ENCODE measurements at regions of chr15 and their contacts with region 1.

Region 1: DNA sequence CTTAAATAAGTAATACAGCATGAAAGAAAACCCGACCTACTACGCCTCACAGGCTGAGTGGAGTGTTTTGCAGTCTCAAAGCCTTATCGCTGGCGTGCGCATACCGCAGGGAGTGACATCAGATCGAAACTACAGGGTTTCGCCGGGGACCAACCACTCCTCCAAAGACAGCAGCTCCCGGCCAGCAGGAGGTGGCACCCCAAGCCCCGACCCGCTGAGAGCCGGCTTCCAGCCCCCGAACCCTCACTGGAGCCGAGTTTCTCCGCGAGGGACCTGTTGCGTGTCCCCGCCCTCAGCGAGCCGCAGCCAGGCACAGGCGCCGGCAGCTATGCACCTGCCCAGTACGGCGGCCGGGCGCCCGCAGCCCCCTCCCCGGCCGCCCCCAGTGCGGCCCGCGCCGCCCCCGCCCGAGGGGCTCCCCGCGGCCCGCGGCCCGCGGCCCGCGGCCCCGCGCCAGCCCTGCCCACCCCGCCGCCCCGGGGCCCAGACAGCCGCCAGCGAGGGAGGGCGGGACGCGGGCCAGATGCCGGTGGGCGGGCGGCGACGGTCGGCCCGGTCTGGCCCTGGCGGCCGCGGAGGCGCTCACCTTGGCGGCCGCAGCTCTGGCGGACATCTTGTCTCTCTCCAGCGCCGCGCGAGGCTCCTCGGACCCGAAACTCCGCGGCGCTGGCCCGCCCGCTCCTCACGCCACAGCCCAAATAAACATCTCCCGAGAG is 694 bp downstream of the TJP1 start:
- DNase-seq: peak; percentile 90
- H3K4me3 ChIP-seq: peak overlapping the region; percentile 72 to 99 (median 93)
- H3K27ac ChIP-seq: peak overlapping the region; percentile 99
- H3K4me1 ChIP-seq: peaks cover 3% of the 10 kb centered on the region
- H3K27me3 ChIP-seq: no peaks in the 10 kb centered on the region
- CTCF ChIP-seq: peak; percentile 15 to 48

Region 2: DNA sequence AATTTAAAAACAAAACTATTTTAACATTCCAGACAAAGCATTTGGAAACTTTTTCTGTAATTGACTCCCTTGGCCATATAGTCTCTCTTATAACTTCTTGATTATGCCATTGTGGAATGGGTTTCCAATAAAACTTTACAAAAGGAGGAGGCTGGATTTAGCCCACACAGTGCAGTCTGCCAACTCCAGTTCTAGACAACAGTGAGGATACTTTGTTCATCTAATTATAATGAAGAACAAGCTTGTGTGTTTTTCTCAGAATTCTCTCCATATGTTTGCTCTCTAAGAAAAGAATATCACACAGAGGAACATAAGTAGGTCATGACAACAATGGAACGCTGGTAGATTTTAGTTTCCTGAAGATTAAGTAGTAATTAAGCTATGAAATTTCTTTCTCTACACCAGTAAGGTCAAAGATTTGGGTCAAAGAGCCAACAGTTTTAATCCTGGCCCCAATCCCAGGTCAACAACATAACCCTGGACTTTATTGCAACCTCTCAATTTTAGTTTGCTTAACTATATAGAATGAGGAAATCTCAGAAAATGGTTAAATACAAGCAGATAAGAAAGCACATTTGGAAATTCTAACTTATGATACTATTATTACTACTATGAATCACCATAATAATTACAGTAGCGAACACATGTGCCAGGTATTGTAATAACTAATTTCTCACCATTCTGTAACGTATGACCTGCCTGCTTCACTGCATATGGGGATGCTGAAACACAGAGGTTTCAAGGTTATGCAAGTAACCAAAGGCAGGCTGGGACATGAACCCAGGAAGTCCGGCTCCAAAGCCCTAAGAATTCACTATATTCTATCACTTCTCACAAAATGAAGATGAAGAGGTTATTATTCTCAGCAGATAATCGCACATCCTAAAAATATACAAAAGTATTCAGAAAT is 65.0 kb before region 1 on chr15:
- CTCF ChIA-PET with region 1: no interaction called
- dilution Hi-C with region 1: no loop called
- in situ Hi-C with region 1: no loop called
- intact Hi-C with region 1: loop called (anchors 5 kb)
- DNase-seq: peak; percentile 87
- H3K4me3 ChIP-seq: peak overlapping the region in 1 of 3 experiments; percentile 14
- H3K27ac ChIP-seq: peak overlapping the region; percentile 69
- H3K4me1 ChIP-seq: peaks cover 21% of the 10 kb centered on the region
- H3K27me3 ChIP-seq: no peaks in the 10 kb centered on the region
- CTCF ChIP-seq: no peak

Region 3: DNA sequence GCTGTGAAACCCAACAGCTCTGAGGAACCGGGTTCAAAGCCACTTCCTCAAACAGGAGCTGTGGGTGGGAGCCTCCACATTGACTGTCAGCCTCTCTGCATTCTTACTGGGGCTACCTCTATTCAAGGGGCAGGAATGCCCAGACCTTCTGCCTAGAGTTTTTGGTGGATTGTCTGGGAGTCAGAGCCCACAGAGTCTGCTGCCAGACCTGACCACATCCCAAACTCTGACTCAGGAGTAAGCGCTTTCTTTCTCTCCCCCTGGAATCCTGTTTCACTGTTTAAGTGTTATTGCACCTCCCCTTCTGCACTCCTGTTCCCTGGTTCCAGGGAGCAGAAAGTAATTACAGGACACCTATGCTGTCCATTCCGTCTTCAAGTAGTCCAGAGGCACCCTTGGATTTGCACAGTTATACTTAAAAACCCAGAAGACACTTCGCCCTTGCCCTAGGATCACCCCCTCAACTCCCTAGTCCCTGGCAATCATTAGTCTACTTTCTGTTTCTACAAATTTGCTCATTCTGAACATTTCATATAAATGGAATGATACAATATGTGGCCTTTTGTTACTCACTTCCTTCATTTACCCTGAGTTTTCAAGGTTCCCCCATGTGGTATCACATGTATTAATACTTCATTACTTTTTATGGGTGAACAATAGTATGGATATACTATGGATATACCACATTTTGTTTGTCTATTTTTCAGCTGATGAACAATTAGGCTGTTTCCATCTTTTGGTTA is 38.6 kb after region 1 on chr15:
- CTCF ChIA-PET with region 1: no interaction called
- dilution Hi-C with region 1: loop called (anchors 5 kb)
- in situ Hi-C with region 1: no loop called
- intact Hi-C with region 1: loop called (anchors 5 kb)
- DNase-seq: peak; percentile 70
- H3K4me3 ChIP-seq: no peak overlapping the region
- H3K27ac ChIP-seq: peak overlapping the region; percentile 44
- H3K4me1 ChIP-seq: peaks cover 23% of the 10 kb centered on the region
- H3K27me3 ChIP-seq: no peaks in the 10 kb centered on the region
- CTCF ChIP-seq: no peak

Region 4: GRCh38 chr15:29917600-29918597 is 96.3 kb after region 1 on chr15:
- CTCF ChIA-PET with region 1: no interaction called
- dilution Hi-C with region 1: loop called (anchors 5 kb)
- in situ Hi-C with region 1: loop called in 1 of 2 experiments (anchors 5 kb)
- intact Hi-C with region 1: loop called (anchors 1 kb)
- DNase-seq: peak; percentile 31
- H3K4me3 ChIP-seq: no peak overlapping the region
- H3K27ac ChIP-seq: no peak overlapping the region
- H3K4me1 ChIP-seq: peaks cover 31% of the 10 kb centered on the region
- H3K27me3 ChIP-seq: no peaks in the 10 kb centered on the region
- CTCF ChIP-seq: no peak

Region 5: DNA sequence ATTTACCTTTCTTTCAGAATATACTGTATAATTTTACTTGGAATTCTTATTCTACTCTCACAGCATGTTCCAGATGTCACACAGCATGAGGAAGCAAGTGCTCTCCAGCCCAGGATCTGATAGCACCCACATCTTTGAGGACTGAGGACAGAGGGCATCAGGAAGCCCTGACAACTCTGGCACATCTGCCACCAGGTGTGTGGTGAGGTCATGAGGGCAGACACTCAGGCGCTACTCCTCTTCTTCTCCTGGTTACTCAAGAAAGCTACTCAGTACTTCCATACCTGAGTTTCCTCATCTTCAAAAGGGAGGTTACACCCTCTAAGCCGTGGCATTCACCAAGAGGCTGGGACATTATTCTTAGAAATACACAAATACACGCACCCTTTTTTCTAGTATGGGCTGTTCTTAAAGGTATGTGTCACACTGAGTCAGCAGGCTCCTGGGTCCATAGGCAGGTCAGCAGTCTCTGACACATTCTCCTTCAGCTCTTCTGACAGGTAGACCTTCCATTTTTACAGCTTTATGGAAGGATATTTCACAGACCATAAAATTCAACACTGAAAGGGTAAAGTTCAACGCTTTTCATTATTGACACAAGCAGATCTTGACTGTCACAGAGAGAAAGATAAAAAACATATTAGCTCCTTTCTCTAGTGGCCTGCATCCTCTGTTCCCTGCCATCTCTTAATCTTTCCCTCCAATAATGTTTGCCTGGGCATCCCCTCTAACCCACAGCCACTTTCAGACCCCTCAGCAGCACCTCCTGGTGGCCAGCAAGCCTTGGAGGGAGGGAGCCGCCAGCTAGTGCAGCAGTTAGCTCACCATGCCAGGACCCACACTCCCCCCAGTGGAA is 103.9 kb after region 1 on chr15:
- CTCF ChIA-PET with region 1: interaction called, 4 read pairs
- dilution Hi-C with region 1: no loop called
- in situ Hi-C with region 1: loop called in 1 of 2 experiments (anchors 5 kb)
- intact Hi-C with region 1: loop called (anchors 1 kb)
- DNase-seq: peak; percentile 93
- H3K4me3 ChIP-seq: no peak overlapping the region
- H3K27ac ChIP-seq: peak overlapping the region; percentile 76
- H3K4me1 ChIP-seq: peaks cover 42% of the 10 kb centered on the region
- H3K27me3 ChIP-seq: no peaks in the 10 kb centered on the region
- CTCF ChIP-seq: peak; percentile 56 to 62

Region 6: GRCh38 chr15:29945943-29946596 is 124.5 kb after region 1 on chr15:
- CTCF ChIA-PET with region 1: no interaction called
- dilution Hi-C with region 1: no loop called
- in situ Hi-C with region 1: no loop called
- intact Hi-C with region 1: loop called (anchors 1 kb)
- DNase-seq: peak; percentile 97
- H3K4me3 ChIP-seq: no peak overlapping the region
- H3K27ac ChIP-seq: peak overlapping the region; percentile 80
- H3K4me1 ChIP-seq: peaks cover 19% of the 10 kb centered on the region
- H3K27me3 ChIP-seq: no peaks in the 10 kb centered on the region
- CTCF ChIP-seq: no peak

Region 7: GRCh38 chr15:30043211-30043655 is 221.7 kb after region 1 on chr15:
- CTCF ChIA-PET with region 1: no interaction called
- dilution Hi-C with region 1: no loop called
- in situ Hi-C with region 1: no loop called
- intact Hi-C with region 1: loop called (anchors 5 kb)
- DNase-seq: no peak
- H3K4me3 ChIP-seq: no peak overlapping the region
- H3K27ac ChIP-seq: no peak overlapping the region
- H3K4me1 ChIP-seq: no peaks in the 10 kb centered on the region
- H3K27me3 ChIP-seq: no peaks in the 10 kb centered on the region
- CTCF ChIP-seq: peak; percentile 23 to 45